GM10248 (cell line): ENCODE measurements at regions of chr5 and their contacts with region 1.

Region 1: GRCh38 chr5:180291943-180292831 is at the start of gene MAPK9:
- DNase-seq: peak; percentile 94
- CTCF ChIP-seq: no peak

Region 2: GRCh38 chr5:179914032-179914755 is 378.0 kb before region 1 on chr5:
- CTCF ChIA-PET with region 1: no interaction called
- POLR2A ChIA-PET with region 1: no interaction called
- DNase-seq: peak; percentile 46
- CTCF ChIP-seq: no peak

Region 3: DNA sequence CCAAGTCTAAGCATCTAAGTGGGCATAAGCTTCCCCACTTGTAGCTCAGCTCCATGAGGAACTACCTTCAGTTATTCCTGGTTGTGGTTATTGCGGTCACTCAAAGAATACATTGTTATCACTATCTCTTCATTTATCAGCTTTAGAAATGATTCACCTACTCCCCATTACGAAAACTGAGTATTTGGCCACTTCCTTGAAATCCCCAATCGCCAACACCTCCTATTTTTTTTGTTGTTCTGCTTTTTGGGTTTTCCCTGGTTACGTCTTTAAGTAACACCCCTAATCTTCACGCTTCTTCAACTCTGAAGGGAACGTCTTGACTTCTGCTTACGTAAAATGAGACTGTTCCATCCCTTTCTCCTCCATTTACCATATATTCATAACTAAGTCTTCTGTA is 21.0 kb before region 1 on chr5:
- CTCF ChIA-PET with region 1: interaction called, 35 read pairs
- POLR2A ChIA-PET with region 1: interaction called, 3 read pairs
- DNase-seq: no peak
- CTCF ChIP-seq: no peak

Region 4: DNA sequence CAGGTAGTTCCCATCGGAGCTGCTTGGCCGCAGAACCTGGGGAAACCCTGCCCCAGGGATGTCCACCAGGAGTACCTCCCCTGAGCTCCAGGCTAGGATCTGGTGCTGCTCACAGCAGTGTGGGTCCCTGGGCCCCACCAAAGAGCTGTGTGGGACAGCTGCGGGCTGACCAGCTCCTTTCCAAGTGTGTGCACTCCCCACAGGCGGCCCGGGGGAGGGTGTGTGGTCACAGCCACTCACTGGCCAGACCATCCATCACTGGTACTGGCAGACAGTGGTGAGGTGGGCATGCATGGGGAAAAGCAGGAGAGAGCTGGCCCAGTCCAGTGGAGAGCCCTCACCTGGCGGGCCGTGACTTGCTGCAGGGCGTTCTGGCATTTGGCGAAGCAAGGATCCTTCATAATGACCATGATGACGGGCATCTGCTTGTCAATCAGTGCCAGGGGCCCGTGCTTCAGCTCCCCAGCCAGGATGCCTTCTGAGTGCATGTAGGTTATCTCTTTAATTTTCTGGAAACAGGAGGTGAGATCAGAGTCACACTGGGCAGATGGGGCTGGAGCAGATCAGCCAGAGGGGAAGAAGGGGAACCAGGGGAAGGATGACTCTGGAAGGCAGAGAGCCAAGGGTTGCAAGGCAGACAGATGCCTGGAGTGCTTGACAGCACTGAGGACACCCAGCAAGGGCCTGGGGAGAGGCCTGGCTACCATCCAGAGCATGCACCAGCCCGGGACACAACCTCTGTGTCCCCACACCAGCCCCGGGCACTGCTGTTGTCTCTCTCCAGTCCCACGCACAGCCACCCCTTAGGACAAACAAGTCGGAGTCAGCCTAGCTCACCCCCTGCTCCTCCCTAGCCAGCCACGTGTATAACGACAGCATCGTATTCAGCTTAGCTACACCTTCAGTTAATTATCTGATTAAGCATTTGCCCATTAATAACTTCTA is 12.5 kb after region 1 on chr5:
- CTCF ChIA-PET with region 1: interaction called, 31 read pairs
- POLR2A ChIA-PET with region 1: no interaction called
- DNase-seq: no peak
- CTCF ChIP-seq: no peak

Region 5: GRCh38 chr5:180315762-180316212 is 23.6 kb after region 1 on chr5:
- CTCF ChIA-PET with region 1: interaction called, 37 read pairs
- POLR2A ChIA-PET with region 1: no interaction called
- DNase-seq: peak; percentile 80
- CTCF ChIP-seq: peak; percentile 70

Region 6: DNA sequence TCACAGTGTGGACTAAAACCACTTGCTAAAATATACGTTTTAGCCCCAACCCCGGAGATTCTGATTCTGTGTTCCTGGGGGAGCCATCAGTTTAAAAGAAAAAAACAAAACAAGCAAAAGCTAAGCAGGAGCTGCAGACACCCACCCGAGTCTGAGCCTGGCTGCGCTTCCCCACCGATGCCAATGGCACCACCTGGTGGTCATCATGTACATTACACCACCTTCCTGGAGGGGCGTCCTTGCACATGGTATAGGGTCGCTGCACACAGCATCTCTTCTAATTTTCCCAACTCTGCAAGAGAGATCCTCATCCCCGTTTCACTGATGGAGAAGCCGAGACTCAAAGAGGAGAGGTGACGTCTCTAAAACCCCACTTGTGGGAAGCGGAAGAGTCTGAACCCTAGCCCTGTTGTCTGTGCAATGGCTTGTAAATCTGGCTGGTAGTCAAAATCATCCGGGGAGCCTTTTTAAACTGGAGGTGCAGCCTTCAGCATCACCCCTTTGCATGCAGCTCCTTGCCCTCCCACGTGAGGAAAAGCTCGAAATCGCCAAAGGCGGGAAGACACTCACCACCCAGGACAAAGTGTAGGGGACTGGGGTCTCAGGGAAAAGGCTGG is 178.9 kb after region 1 on chr5:
- CTCF ChIA-PET with region 1: interaction called, 26 read pairs
- POLR2A ChIA-PET with region 1: no interaction called
- DNase-seq: peak; percentile 78
- CTCF ChIP-seq: peak; percentile 86